Activated naive CD4-positive, alpha-beta T cell treated with anti-CD3 and anti-CD28 coated beads for 36 hours (primary cell): ENCODE measurements at regions of chr17 and their contacts with region 1.

Region 1: GRCh38 chr17:33725675-33726271 is 432.7 kb upstream of the ASIC2 start:
- DNase-seq: peak; percentile 23
- H3K4me3 Mint-ChIP-seq: no peak overlapping the region
- H3K27ac Mint-ChIP-seq: no peak overlapping the region
- H3K4me1 Mint-ChIP-seq: no peaks in the 10 kb centered on the region
- H3K27me3 Mint-ChIP-seq: peaks cover 25% of the 10 kb centered on the region

Region 2: DNA sequence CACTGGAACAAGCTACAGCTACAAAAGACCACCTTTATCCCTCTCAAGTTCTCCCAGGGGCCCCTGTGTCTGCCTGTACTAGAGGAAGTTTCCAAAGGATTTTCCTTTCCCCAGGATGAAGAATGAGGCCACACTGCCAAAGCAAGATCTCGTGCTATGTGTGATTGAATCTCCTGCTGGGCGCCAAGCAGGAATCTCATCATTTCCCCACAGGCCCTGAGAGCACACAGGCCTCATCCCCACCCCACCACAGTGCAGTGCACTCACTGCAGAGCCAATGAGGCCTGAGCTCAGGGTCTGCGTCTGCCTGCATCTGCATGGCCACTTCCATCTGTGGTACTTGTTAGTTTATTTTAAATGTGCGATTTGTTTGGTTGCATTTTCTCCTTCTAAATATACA is 45.3 kb before region 1 on chr17:
- CTCF ChIA-PET with region 1: no interaction called
- intact Hi-C with region 1: no loop called
- DNase-seq: no peak
- H3K4me3 Mint-ChIP-seq: no peak overlapping the region
- H3K27ac Mint-ChIP-seq: no peak overlapping the region
- H3K4me1 Mint-ChIP-seq: no peaks in the 10 kb centered on the region
- H3K27me3 Mint-ChIP-seq: no peaks in the 10 kb centered on the region

Region 3: DNA sequence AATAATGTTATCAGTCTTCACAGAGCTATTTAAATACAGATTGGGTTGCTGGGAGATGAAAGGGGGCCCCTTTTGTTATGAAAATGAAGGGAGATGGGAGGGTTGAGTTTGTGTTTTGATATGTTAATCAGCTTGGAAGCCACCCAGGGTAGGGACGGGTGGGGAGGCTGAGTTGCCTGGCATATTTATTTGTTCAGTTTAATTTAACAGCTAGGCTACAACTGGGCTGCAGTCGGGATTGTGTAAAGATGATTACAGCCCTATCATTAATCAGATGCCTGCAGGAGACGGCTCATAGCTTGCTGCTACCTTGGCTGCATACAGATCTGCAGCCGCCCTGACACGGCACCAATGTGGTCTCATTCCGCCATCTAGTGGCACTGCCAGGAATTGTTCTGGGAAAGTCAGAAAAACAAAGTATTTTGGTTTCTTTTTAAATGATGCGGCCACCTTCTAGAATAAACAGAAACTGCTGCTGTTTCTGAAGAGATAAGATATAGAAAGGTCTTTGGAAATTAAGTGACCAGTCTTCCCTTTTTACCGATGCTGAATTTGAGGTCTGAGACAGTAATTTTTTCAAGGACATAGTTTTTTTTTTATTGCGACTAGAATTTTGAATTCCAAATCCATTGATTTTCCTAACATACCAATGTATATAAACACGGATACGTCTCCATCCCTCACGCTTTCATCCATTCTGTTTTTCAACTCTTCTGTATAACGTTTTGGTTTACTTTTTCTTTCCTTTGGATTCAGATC is 25.3 kb after region 1 on chr17:
- CTCF ChIA-PET with region 1: interaction called, 5 read pairs
- intact Hi-C with region 1: loop called (anchors 1 kb)
- DNase-seq: peak; percentile 81
- H3K4me3 Mint-ChIP-seq: no peak overlapping the region
- H3K27ac Mint-ChIP-seq: no peak overlapping the region
- H3K4me1 Mint-ChIP-seq: peaks cover 4% of the 10 kb centered on the region
- H3K27me3 Mint-ChIP-seq: peaks cover 44% of the 10 kb centered on the region

Region 4: DNA sequence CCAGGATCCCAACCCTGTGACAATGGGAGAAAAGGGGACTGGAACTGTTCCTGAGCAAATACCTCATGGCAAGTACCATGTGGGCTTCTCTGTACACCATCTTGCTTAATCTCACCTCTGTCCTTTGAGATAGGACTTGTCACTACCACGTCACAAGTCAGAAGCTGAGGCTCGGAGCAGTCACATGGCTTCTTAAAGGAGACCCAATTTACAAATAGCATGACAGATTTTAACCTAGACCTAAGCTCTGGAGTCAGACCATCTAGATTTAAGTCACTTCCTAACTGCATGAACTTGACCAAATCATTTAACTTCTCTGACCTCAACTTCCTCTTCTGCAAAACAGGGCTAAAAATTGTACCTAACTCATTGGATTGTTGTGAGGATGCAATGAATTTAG is 673.2 kb after region 1 on chr17:
- CTCF ChIA-PET with region 1: no interaction called
- intact Hi-C with region 1: no loop called
- DNase-seq: no peak
- H3K4me3 Mint-ChIP-seq: no peak overlapping the region
- H3K27ac Mint-ChIP-seq: no peak overlapping the region
- H3K4me1 Mint-ChIP-seq: no peaks in the 10 kb centered on the region
- H3K27me3 Mint-ChIP-seq: peaks cover 5% of the 10 kb centered on the region